Natural killer cell (primary cell): ENCODE measurements at regions of chr2 and their contacts with region 1.

Region 1: DNA sequence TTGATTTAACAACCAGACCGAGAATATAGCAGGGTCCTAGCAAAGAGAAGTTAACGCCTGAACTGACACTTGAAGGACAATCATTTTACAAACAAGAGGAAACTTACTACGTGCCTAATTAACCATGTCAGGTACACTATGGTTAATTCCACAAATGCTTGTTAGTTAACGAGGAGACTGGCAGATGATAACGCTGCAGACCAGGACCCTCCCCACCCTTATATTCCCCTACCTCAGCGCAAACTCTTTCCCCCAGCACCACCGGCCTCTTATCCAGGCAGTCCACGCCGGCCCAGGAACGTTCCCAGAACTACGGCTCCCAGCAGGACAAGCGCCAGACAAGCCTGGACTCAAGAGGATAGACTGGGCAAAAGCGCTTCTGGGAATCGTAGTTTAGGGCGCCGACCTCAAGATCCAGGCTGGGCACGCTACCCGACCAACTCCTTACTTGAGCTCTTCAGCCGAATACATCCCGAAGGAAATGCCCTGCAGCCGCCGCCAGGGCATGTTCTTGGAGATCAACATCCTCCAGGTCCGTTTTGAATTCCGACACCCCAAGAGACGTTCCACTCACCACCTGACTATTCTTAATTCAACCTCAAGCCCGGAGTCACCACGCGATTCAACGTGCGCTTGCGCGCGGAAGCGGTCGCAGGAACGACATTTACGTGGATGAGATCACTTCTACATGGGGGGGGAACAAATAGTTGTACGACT is at the start of gene POLR1A:
- DNase-seq: peak; percentile 78 to 93
- ATAC-seq: peak; percentile 76 to 85 (median 78)
- H3K4me3 ChIP-seq: peak within 1 kb of the TSS; percentile 92
- H3K4me3 Mint-ChIP-seq: peak within 1 kb of the TSS; percentile 97
- H3K27ac ChIP-seq: peak within 1 kb of the TSS; percentile 92
- H3K27ac Mint-ChIP-seq: peak within 1 kb of the TSS; percentile 94 to 98
- H3K4me1 ChIP-seq: peaks cover 9% of the 10 kb centered on the region
- H3K4me1 Mint-ChIP-seq: peaks cover 59 to 61% of the 10 kb centered on the region in 2 donors
- H3K27me3 ChIP-seq: no peaks in the 10 kb centered on the region
- H3K27me3 Mint-ChIP-seq: no peaks in the 10 kb centered on the region
- CTCF ChIP-seq: no peak
- total RNA-seq, gene POLR1A: 19.7 to 26.5 (median 22.8) TPM

Region 2: GRCh38 chr2:84970868-84971509 is 1134.4 kb before region 1 on chr2 and contains the start of gene KCMF1:
- intact Hi-C with region 1: no loop called
- DNase-seq: peak; percentile 72 to 77
- ATAC-seq: peak; percentile 60 to 72 (median 65)
- H3K4me3 ChIP-seq: peak within 1 kb of the TSS; percentile 81
- H3K4me3 Mint-ChIP-seq: peak within 1 kb of the TSS; percentile 95
- H3K27ac ChIP-seq: peak within 1 kb of the TSS; percentile 87
- H3K27ac Mint-ChIP-seq: peak within 1 kb of the TSS; percentile 95 to 97
- H3K4me1 ChIP-seq: peaks cover 14% of the 10 kb centered on the region
- H3K4me1 Mint-ChIP-seq: peaks cover 56 to 58% of the 10 kb centered on the region in 2 donors
- H3K27me3 ChIP-seq: no peaks in the 10 kb centered on the region
- H3K27me3 Mint-ChIP-seq: no peaks in the 10 kb centered on the region
- CTCF ChIP-seq: no peak
- total RNA-seq, gene KCMF1: 70.8 to 81.4 (median 77.1) TPM

Region 3: GRCh38 chr2:85728883-85729824 is 376.3 kb before region 1 on chr2:
- intact Hi-C with region 1: loop called (anchors 10 kb)
- DNase-seq: peak; percentile 72 to 80
- ATAC-seq: peak; percentile 86 to 97 (median 96)
- H3K4me3 ChIP-seq: no peak overlapping the region
- H3K4me3 Mint-ChIP-seq: no peak overlapping the region
- H3K27ac ChIP-seq: no peak overlapping the region
- H3K27ac Mint-ChIP-seq: peak overlapping the region in 1 of 2 donors; percentile 11
- H3K4me1 ChIP-seq: peaks cover 12% of the 10 kb centered on the region
- H3K4me1 Mint-ChIP-seq: peaks cover 8 to 12% of the 10 kb centered on the region in 2 donors
- H3K27me3 ChIP-seq: no peaks in the 10 kb centered on the region
- H3K27me3 Mint-ChIP-seq: peaks cover 7 to 8% of the 10 kb centered on the region in 2 donors
- CTCF ChIP-seq: peak; percentile 87

Region 4: GRCh38 chr2:85988175-85988913 is 117.1 kb before region 1 on chr2:
- intact Hi-C with region 1: no loop called
- DNase-seq: no peak
- ATAC-seq: no peak
- H3K4me3 ChIP-seq: no peak overlapping the region
- H3K4me3 Mint-ChIP-seq: no peak overlapping the region
- H3K27ac ChIP-seq: no peak overlapping the region
- H3K27ac Mint-ChIP-seq: peak overlapping the region in 1 of 2 donors; percentile 5
- H3K4me1 ChIP-seq: peaks cover 2% of the 10 kb centered on the region
- H3K4me1 Mint-ChIP-seq: peaks cover 0 to 7% of the 10 kb centered on the region in 2 donors
- H3K27me3 ChIP-seq: no peaks in the 10 kb centered on the region
- H3K27me3 Mint-ChIP-seq: no peaks in the 10 kb centered on the region
- CTCF ChIP-seq: no peak

Region 5: DNA sequence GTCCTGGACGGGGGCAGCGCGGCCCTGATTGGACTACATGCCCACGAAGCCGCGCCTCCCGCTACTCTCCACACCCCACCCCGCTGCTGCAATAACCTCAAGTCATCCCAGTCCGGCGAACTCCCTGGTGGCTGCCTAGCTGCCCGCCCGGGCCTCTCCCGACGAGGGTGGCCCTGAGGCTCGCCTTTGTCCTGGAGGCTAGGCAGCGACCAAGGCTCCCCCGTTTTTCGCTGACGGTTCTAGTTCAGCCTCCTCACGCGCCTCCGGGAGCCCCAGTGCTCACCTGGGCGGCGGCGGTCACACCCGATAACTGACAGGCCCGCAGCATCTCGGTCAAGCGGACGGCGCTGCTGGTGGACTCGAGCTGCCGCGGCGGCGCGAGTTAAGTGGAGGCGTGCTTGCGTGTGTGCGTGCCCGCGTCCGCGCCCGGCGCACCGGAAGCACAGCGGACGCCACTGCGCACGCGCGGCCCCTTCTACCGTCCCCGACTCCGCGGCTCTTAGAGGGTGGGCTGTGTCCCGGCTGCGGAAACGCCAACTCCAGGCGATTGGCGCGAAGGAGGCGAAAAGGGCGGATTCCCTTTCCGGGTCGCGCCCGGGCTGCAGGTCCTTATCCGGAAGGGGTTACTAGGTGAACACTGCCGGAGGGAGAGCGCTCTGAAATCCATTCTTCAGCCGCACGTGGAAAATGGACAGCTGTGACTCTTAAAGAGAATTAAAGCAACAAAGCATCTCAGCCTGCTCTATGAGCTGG is 89.8 kb after region 1 on chr2 and contains the start of gene IMMT:
- intact Hi-C with region 1: loop called (anchors 5 kb)
- DNase-seq: peak; percentile 86 to 97
- ATAC-seq: peak; percentile 88 to 97 (median 91)
- H3K4me3 ChIP-seq: peak within 1 kb of the TSS; percentile 99
- H3K4me3 Mint-ChIP-seq: peak within 1 kb of the TSS; percentile 97
- H3K27ac ChIP-seq: peak within 1 kb of the TSS; percentile 98
- H3K27ac Mint-ChIP-seq: peak within 1 kb of the TSS; percentile 97
- H3K4me1 ChIP-seq: peaks cover 27% of the 10 kb centered on the region
- H3K4me1 Mint-ChIP-seq: peaks cover 54 to 61% of the 10 kb centered on the region in 2 donors
- H3K27me3 ChIP-seq: no peaks in the 10 kb centered on the region
- H3K27me3 Mint-ChIP-seq: no peaks in the 10 kb centered on the region
- CTCF ChIP-seq: no peak
- total RNA-seq, gene IMMT: 54.5 to 62.6 (median 59.0) TPM